ENCODE measurements at regions of chr15 and their contacts with region 1.

Region 1: DNA sequence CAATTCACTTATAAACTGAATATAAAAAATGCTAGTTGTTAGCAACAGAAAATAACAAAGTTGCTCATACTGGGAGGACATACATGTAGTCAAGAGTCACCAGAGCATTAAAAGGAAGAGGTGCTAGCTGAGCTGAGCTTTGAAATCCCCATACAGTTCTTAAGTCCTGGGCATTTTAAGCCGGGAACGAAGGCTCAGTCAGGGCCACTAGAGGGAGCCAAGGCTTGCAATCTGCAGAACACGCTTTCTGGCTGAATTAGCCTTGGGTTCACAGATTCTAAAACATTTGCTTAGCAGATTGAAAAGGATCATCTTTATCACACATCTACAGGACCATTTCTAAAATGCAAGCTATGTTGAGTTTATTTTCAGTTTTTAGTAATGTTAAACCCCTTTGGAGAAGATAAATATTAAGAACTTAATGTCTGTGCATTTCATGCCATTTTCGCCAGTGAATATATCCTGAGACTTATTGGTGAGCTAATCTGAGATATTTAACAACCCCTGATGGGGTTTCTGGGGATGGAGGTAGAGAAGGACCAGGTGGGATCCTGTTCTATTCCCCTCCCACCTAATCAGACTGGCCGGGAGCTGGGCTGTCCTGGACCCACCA is 26.3 kb upstream of the MNS1 start:
- DNase-seq: peak; percentile 76
- H3K4me3 ChIP-seq: no peak overlapping the region
- H3K27ac ChIP-seq: no peak overlapping the region
- H3K4me1 ChIP-seq: no peaks in the 10 kb centered on the region
- H3K27me3 ChIP-seq: peaks cover 15 to 17% of the 10 kb centered on the region in 2 experiments
- CTCF ChIP-seq: peak; percentile 85 to 94
- POLR2A ChIP-seq: no peak

Region 2: DNA sequence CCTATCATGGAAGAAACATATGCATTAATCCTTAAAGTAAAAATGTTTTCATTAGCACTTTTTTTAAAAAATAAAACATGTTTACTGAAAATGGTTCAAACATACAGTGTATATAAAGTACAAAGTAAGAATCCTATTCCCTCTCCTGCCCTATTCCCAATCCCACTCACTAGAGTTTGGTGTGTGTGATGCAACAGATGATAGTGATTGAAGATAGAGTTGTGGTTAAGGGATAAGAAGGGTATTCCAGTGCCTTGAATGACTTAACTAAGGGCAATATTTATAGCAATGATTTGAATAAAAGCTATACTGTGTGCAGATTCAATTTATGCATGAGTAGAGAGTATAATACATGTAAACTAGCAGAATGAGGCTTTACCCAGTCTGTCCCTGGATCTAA is 224.0 kb after region 1 on chr15:
- CTCF ChIA-PET with region 1: no interaction called
- POLR2A ChIA-PET with region 1: no interaction called
- dilution Hi-C with region 1: no loop called
- intact Hi-C with region 1: no loop called
- DNase-seq: no peak
- H3K4me3 ChIP-seq: no peak overlapping the region
- H3K27ac ChIP-seq: no peak overlapping the region
- H3K4me1 ChIP-seq: no peaks in the 10 kb centered on the region
- H3K27me3 ChIP-seq: no peaks in the 10 kb centered on the region
- CTCF ChIP-seq: no peak
- POLR2A ChIP-seq: no peak

Region 3: GRCh38 chr15:56869573-56869972 is 378.4 kb after region 1 on chr15:
- CTCF ChIA-PET with region 1: interaction called, 89 read pairs
- POLR2A ChIA-PET with region 1: no interaction called
- dilution Hi-C with region 1: no loop called
- intact Hi-C with region 1: loop called (anchors 1 kb)
- DNase-seq: peak; percentile 31
- H3K4me3 ChIP-seq: no peak overlapping the region
- H3K27ac ChIP-seq: no peak overlapping the region
- H3K4me1 ChIP-seq: peaks cover 16% of the 10 kb centered on the region
- H3K27me3 ChIP-seq: no peaks in the 10 kb centered on the region
- CTCF ChIP-seq: peak; percentile 41 to 46
- POLR2A ChIP-seq: no peak

Region 4: GRCh38 chr15:57017024-57017423 is 525.8 kb after region 1 on chr15:
- CTCF ChIA-PET with region 1: no interaction called
- POLR2A ChIA-PET with region 1: no interaction called
- dilution Hi-C with region 1: no loop called
- intact Hi-C with region 1: loop called (anchors 10 kb)
- DNase-seq: peak; percentile 44
- H3K4me3 ChIP-seq: no peak overlapping the region
- H3K27ac ChIP-seq: no peak overlapping the region
- H3K4me1 ChIP-seq: peaks cover 6% of the 10 kb centered on the region
- H3K27me3 ChIP-seq: no peaks in the 10 kb centered on the region
- CTCF ChIP-seq: peak in 1 of 2 donors; percentile 12
- POLR2A ChIP-seq: no peak

Region 5: GRCh38 chr15:57133127-57133968 is 642.1 kb after region 1 on chr15:
- CTCF ChIA-PET with region 1: interaction called, 10 read pairs
- POLR2A ChIA-PET with region 1: no interaction called
- dilution Hi-C with region 1: no loop called
- intact Hi-C with region 1: loop called (anchors 5 kb)
- DNase-seq: peak; percentile 57
- H3K4me3 ChIP-seq: no peak overlapping the region
- H3K27ac ChIP-seq: no peak overlapping the region
- H3K4me1 ChIP-seq: peaks cover 43% of the 10 kb centered on the region
- H3K27me3 ChIP-seq: no peaks in the 10 kb centered on the region
- CTCF ChIP-seq: no peak
- POLR2A ChIP-seq: no peak

Region 6: DNA sequence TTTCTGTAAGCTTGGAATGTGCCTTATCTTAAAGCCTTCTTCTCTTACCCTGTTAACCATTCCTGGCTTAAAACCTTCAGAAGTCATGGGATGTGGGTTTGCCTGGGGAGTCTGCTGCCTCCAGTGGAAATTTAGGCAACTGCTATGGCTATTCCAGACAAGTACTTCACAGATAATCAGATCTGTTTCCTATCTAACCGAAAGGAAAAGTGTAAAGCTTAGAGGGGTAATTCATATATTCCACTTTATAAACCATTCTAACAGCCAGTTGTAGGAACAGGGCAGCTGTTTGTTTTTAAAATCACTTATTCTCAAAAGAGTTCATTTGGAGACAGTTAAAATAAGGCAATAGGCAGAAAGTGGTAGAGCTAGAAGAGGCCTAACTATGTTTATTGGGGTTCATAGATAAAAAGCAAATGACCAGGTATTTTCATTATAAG is 647.2 kb after region 1 on chr15:
- CTCF ChIA-PET with region 1: interaction called, 10 read pairs
- POLR2A ChIA-PET with region 1: no interaction called
- dilution Hi-C with region 1: no loop called
- intact Hi-C with region 1: loop called (anchors 5 kb)
- DNase-seq: peak; percentile 75
- H3K4me3 ChIP-seq: no peak overlapping the region
- H3K27ac ChIP-seq: no peak overlapping the region
- H3K4me1 ChIP-seq: peaks cover 33% of the 10 kb centered on the region
- H3K27me3 ChIP-seq: no peaks in the 10 kb centered on the region
- CTCF ChIP-seq: peak; percentile 61 to 74
- POLR2A ChIP-seq: no peak

Region 7: DNA sequence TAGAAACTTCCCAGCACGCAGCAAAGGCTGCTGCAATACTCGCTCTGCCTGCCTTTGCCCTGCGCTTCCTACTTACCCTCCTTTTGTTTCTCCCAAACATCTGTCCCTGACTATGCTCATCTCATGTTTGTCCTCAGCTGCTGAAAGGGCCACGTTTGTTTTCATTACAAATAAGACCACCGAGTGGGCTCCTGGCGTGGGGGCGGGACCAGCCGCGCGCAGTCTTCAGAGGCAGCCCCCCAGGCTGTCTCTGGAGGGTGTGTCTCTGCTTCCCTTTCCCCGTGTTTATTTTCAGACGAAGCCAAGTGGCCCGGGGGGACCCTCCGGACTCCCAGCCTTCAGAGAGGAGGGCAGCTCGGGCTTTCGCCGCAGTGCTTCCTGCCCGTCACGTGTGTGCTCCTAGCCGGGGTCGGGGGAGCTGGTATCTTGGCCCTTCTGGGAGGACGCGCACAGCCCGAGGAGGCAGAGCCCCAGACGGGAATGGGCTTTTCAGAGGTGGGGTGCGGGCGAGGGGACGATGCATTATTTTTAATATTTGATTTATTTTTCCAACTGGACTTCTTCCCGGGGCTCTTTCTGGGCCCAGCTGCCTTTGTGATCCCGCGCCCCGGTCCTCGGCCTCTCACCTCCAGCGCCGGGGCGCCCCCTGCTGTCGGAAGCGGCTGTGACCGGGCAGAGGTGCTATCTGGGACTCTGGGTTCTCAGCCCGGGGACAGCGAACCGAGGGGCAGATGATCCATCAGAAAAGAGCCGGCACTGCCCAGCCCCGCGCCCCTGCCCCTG is 815.1 kb after region 1 on chr15:
- CTCF ChIA-PET with region 1: interaction called, 21 read pairs
- POLR2A ChIA-PET with region 1: no interaction called
- dilution Hi-C with region 1: no loop called
- intact Hi-C with region 1: loop called (anchors 1 kb)
- DNase-seq: peak; percentile 53
- H3K4me3 ChIP-seq: peak overlapping the region; percentile 33 to 39 (median 35)
- H3K27ac ChIP-seq: peak overlapping the region; percentile 32
- H3K4me1 ChIP-seq: peaks cover 11% of the 10 kb centered on the region
- H3K27me3 ChIP-seq: no peaks in the 10 kb centered on the region
- CTCF ChIP-seq: peak; percentile 90 to 91
- POLR2A ChIP-seq: no peak

Region 8: GRCh38 chr15:57541805-57542504 is 1050.7 kb after region 1 on chr15:
- CTCF ChIA-PET with region 1: interaction called, 15 read pairs
- POLR2A ChIA-PET with region 1: no interaction called
- dilution Hi-C with region 1: no loop called
- intact Hi-C with region 1: loop called (anchors 2 kb)
- DNase-seq: peak; percentile 77
- H3K4me3 ChIP-seq: no peak overlapping the region
- H3K27ac ChIP-seq: no peak overlapping the region
- H3K4me1 ChIP-seq: peaks cover 6% of the 10 kb centered on the region
- H3K27me3 ChIP-seq: no peaks in the 10 kb centered on the region
- CTCF ChIP-seq: peak; percentile 82 to 91
- POLR2A ChIP-seq: no peak

Measured in endothelial cell of umbilical vein (primary cell).